ENCODE measurements at regions of chr14 and their contacts with region 1.

Region 1: DNA sequence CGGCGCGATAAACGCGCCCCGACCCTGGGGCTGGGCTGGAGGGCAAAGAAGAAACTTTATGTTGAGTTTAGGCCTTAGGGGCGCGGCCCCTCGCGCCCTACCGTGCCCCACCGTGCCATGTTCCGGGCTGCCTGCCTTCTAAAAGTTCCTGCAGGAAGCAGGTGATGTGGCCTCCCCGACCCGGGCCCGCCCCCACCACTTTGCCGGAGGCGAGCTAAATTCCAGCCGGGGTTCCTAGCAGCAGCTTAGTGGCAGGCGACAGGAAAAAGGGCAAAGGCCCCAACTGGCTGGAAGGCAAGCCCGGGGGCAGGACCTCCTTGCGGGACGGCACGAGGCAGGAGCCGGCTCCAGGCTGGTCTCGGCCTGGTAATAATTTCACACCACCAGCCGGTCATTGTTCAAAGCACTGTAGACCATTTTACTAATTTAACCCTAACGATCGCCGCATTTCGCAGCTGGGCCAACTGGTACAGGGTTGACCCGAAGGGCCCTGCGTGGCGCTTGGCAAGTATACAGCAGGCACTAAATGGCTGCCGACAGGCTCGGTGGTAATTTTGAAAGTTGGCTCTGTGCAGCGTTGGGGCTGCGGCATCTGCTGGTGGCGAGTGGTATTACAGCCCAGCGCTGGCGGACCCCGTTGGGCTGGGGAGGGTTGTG is 895 bp upstream of the CCDC88C start:
- DNase-seq: peak; percentile 42
- ATAC-seq: peak; percentile 45
- H3K4me3 ChIP-seq: no peak overlapping the region; a peak in 1 of 4 replicates
- H3K27ac ChIP-seq: peak overlapping the region; percentile 60; the same call in 1 of the 2 replicates
- H3K4me1 ChIP-seq: peaks cover 11 to 29% of the 10 kb centered on the region in 2 experiments
- H3K27me3 ChIP-seq: no peaks in the 10 kb centered on the region
- CTCF ChIP-seq: peak; percentile 63 to 97 (median 93); a peak in 5 of 6 replicates
- POLR2A ChIP-seq: no peak
- RAD21 ChIP-seq: peak; percentile 78

Region 2: DNA sequence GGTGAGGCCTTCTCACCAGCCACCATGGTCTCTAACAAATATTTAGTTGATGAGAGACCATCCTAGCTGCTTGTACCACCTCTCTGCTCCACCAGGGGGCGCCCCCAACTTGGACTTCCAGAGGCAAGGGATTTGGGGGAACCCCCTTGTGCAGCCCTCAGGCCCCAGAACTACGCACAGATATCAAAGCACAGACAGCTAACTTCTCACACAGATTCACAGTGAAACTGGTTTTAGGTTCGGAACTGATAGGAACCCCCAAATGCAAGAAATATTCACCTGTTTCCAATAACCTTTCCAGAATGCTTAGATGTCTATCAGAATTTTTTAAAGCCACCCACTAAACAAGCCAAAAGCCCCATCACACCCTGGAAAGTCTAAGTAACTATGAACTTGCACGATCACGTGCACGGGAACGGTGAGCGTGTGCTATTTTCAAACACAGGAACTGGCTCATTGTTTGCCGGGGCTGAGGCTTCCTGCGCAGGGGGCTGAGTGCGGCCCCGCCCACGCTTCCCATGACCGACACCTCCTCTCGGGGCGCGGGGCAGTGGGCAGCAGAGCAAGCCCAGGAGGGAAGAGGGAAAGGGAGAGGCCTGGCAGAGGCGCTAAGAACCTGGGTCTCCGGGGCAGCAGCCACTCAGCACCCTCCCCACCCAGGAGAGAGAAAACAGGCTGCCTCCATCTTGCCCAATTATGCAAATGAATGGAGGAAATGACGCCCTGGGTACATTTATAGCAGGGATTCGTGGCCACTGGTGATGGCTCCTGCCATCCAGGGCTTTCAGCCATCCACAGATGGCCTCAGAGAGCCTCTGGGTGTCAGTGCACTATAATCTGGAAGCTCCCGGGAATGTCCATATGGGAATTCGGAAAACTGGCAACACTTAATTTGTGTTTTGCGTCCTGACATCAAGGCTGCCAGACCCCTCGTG is 94.6 kb before region 1 on chr14:
- CTCF ChIA-PET with region 1: interaction called, 11 read pairs
- POLR2A ChIA-PET with region 1: no interaction called
- RAD21 ChIA-PET with region 1: interaction called in 1 of 2 experiments, 5 read pairs
- intact Hi-C with region 1: loop called (anchors 1 kb)
- DNase-seq: peak; percentile 18
- ATAC-seq: peak; percentile 85
- H3K4me3 ChIP-seq: no peak overlapping the region
- H3K27ac ChIP-seq: no peak overlapping the region
- H3K4me1 ChIP-seq: no peaks in the 10 kb centered on the region
- H3K27me3 ChIP-seq: no peaks in the 10 kb centered on the region
- CTCF ChIP-seq: peak; percentile 83 to 98 (median 95)
- POLR2A ChIP-seq: no peak
- RAD21 ChIP-seq: peak; percentile 85

Region 3: DNA sequence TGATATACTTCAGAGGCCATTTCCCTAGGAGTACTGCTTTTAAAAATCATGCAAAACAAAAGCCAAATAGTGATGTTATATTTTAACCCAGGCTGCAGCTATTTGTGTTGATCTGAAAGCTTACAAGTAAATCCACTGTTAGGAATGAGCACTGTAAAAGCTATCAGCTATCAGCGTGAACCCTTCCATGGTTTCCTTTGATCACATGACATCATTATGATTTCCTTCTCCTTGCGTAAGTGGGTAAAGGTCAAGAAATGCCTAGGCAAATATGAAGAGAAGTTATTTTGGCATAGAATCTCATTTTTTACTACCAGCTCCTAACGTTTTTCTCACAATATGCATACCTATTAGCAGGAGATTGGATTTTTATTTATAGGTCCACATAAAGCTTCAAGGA is 361.9 kb after region 1 on chr14:
- CTCF ChIA-PET with region 1: no interaction called
- POLR2A ChIA-PET with region 1: no interaction called
- RAD21 ChIA-PET with region 1: no interaction called
- intact Hi-C with region 1: no loop called
- DNase-seq: no peak
- ATAC-seq: no peak
- H3K4me3 ChIP-seq: no peak overlapping the region
- H3K27ac ChIP-seq: no peak overlapping the region
- H3K4me1 ChIP-seq: no peaks in the 10 kb centered on the region
- H3K27me3 ChIP-seq: no peaks in the 10 kb centered on the region
- CTCF ChIP-seq: no peak
- POLR2A ChIP-seq: no peak
- RAD21 ChIP-seq: no peak